Activated CD4-positive, alpha-beta memory T cell treated with anti-CD3 and anti-CD28 coated beads, Interleukin-2, amount 10 ng/mL, durations not matched to agents 7 days and 5 days (primary cell): ENCODE measurements at regions of chr18 and their contacts with region 1.

Region 1: GRCh38 chr18:21704603-21705364 is at the start of gene ABHD3:
- DNase-seq: peak; percentile 94
- H3K4me3 Mint-ChIP-seq: peak within 1 kb of the TSS; percentile 98
- H3K27ac Mint-ChIP-seq: peak within 1 kb of the TSS; percentile 96
- H3K4me1 Mint-ChIP-seq: peaks cover 45% of the 10 kb centered on the region
- H3K27me3 Mint-ChIP-seq: no peaks in the 10 kb centered on the region
- total RNA-seq, gene ABHD3: 49.2 to 53.5 TPM

Region 2: DNA sequence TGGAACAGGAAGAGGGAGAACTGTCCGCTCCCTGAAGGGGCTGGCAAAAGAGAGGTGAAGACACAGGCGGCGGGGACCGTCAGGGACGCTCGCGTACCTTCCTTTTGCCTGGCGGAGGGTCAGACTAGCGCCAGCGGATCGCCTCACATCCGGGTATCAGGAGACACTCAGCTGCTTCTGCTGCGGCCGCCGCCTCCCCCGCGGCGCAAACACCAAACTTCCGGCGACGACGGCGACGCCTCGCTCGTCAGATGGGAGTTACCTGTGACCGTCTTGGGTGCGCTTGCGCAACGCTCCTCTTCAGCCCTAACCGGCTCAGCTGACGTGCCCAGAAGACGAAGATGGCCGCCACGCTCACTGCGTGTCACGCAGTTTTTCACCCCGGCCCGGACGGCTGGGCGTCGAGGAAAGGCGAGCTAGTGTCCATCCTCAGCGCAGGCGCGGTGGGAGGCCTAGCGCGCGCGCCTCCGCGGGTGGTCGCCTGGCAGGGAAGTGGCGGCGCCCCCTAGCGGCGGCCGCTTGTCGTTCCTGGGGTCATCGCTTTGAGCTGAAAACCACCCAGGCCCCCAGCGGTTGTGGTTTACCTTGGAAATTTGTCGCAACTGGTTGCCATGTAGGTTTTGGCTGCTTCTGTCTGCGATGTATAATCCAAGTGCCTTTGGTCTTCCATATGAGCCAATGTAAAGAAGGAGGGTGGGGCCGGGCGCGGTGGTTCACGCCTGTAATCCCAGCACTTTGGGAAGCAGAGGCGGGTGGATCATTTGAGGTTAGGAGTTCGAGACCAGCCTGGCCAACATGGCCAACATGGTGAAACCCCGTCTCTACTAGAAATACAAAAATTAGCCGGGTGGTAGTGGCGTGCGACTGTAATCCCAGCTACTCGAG is 104.0 kb before region 1 on chr18 and contains the start of gene ESCO1:
- CTCF ChIA-PET with region 1: interaction called, 9 read pairs
- POLR2A ChIA-PET with region 1: interaction called, 32 read pairs
- DNase-seq: peak; percentile 96
- H3K4me3 Mint-ChIP-seq: peak within 1 kb of the TSS; percentile 97
- H3K27ac Mint-ChIP-seq: peak within 1 kb of the TSS; percentile 98
- H3K4me1 Mint-ChIP-seq: peaks cover 36% of the 10 kb centered on the region
- H3K27me3 Mint-ChIP-seq: no peaks in the 10 kb centered on the region
- total RNA-seq, gene ESCO1: 22.8 to 22.9 TPM

Region 3: DNA sequence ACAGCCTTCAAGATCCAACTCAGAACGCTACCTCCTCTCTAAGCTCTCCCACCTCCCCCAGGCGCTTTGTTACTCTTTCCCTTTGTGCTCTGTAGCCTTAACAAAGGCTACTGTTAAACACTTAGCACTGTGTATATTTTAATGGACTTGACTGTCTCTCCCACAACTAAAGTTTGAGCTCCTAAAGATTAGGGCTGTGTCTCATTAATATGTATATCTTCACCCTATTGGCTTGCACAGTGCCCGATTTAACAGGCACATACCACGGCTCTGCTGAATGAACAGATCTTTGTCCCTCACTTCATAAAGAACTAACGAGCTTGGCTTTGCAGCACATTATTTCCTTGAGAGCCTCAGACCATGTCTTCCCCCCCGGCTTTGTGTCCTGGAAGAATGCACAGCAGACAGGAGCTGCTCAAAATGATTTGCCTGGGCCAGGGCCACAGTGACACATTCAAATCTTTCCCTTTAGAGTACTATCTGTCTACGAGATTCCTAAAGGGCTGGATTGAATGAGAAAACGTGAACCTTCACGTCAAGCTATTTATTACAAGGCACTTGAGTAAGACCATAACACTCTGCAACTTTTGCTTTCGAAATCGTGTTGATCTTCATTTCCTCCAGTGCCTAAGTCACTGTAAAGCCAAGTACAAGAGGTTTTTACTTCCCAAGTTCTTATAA is 22.3 kb before region 1 on chr18:
- CTCF ChIA-PET with region 1: interaction called, 3 read pairs
- POLR2A ChIA-PET with region 1: interaction called, 32 read pairs
- DNase-seq: peak; percentile 28
- H3K4me3 Mint-ChIP-seq: no peak overlapping the region
- H3K27ac Mint-ChIP-seq: no peak overlapping the region
- H3K4me1 Mint-ChIP-seq: peaks cover 15% of the 10 kb centered on the region
- H3K27me3 Mint-ChIP-seq: no peaks in the 10 kb centered on the region

Region 4: GRCh38 chr18:21735452-21736015 is 30.8 kb after region 1 on chr18:
- CTCF ChIA-PET with region 1: interaction called, 7 read pairs
- POLR2A ChIA-PET with region 1: interaction called, 113 read pairs
- DNase-seq: peak; percentile 77
- H3K4me3 Mint-ChIP-seq: peak overlapping the region; percentile 13
- H3K27ac Mint-ChIP-seq: peak overlapping the region; percentile 78
- H3K4me1 Mint-ChIP-seq: peaks cover 32% of the 10 kb centered on the region
- H3K27me3 Mint-ChIP-seq: peaks cover 5% of the 10 kb centered on the region

Region 5: DNA sequence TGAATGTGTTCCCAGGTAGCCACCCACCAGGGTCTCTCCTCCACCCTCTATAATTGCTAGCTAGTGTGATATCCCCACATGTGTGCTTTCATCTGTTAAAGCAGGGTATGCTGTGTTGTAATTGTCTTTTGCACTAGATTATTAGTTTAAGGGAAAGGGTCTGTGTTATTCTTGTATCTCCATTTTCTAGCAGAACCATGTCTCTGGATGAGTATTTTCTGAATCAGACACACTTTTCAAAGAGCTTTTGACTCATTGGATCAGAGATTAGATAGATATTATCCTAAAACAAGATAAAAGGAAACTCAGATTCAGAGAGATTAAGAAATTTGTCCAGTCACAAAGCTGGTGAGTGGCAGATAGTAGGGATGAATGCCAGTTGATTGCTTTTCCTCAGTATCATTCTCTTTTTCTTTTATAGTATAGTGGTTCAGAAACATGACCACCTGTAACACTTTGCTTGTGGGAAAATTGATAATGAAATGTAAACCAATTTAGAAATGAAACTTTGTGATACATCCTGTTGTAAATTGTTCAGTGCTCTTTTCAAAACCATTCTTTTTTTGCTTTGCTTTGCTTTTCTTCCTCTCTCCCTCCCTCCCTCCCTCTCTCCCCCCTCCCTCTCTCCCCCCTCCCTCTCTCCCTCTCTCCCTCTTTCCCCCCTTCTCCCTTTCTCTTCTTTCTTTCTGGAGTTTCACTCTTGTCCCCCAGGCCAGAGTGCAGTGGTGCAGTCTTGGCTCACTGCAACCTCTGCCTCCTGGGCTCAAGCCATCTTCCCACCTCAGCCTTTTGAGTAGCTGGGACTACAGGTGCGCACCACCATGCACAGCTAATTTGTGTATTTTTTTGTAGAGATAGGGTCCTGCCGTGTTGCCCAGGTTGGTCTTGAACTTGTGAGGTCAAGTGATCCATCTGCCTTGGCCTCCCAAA is 43.2 kb after region 1 on chr18:
- CTCF ChIA-PET with region 1: interaction called, 4 read pairs
- POLR2A ChIA-PET with region 1: interaction called, 113 read pairs
- DNase-seq: no peak
- H3K4me3 Mint-ChIP-seq: peak overlapping the region; percentile 9
- H3K27ac Mint-ChIP-seq: peak overlapping the region; percentile 71
- H3K4me1 Mint-ChIP-seq: peaks cover 53% of the 10 kb centered on the region
- H3K27me3 Mint-ChIP-seq: no peaks in the 10 kb centered on the region